Heart right ventricle (tissue), 16 donors: ENCODE measurements at regions of chr2 and their contacts with region 1.

Region 1: GRCh38 chr2:237413777-237414661 is at the start of gene COL6A3:
- DNase-seq: peak; percentile 59 to 77
- ATAC-seq: peak; percentile 65 to 81 (median 69)
- H3K4me3 ChIP-seq: peak within 1 kb of the TSS; percentile 32 to 63 (median 57)
- H3K27ac ChIP-seq: peak within 1 kb of the TSS; percentile 66 to 87 (median 81)
- H3K4me1 ChIP-seq: peaks cover 0 to 20% (median 2%) of the 10 kb centered on the region in 9 donors
- H3K27me3 ChIP-seq: peaks cover 0 to 26% (median 3%) of the 10 kb centered on the region in 7 donors
- CTCF ChIP-seq: no peak
- total RNA-seq, gene COL6A3: 27.7 to 222 (median 47.5) TPM

Region 2: GRCh38 chr2:237092920-237093781 is 320.9 kb before region 1 on chr2:
- intact Hi-C with region 1: loop called in 1 of 10 experiments (anchors 10 kb)
- DNase-seq: peak in 1 of 2 donors; percentile 48
- ATAC-seq: peak; percentile 66 to 82 (median 72)
- H3K4me3 ChIP-seq: no peak overlapping the region
- H3K27ac ChIP-seq: peak overlapping the region in 2 of 10 donors; percentile 50 to 62
- H3K4me1 ChIP-seq: peaks cover 0 to 60% (median 21%) of the 10 kb centered on the region in 9 donors
- H3K27me3 ChIP-seq: no peaks in the 10 kb centered on the region
- CTCF ChIP-seq: peak; percentile 24 to 67 (median 54)

Region 3: GRCh38 chr2:237113026-237113795 is 300.8 kb before region 1 on chr2:
- intact Hi-C with region 1: no loop called
- DNase-seq: no peak
- ATAC-seq: no peak
- H3K4me3 ChIP-seq: no peak overlapping the region
- H3K27ac ChIP-seq: no peak overlapping the region
- H3K4me1 ChIP-seq: peaks cover 0 to 7% (median 0%) of the 10 kb centered on the region in 9 donors
- H3K27me3 ChIP-seq: no peaks in the 10 kb centered on the region
- CTCF ChIP-seq: no peak

Region 4: GRCh38 chr2:237154082-237154638 is 259.9 kb before region 1 on chr2:
- intact Hi-C with region 1: loop called in 5 of 10 experiments (anchors 1 to 10 kb)
- DNase-seq: no peak
- ATAC-seq: no peak
- H3K4me3 ChIP-seq: no peak overlapping the region
- H3K27ac ChIP-seq: peak overlapping the region in 5 of 10 donors; percentile 14 to 82 (median 76)
- H3K4me1 ChIP-seq: peaks cover 0 to 28% (median 7%) of the 10 kb centered on the region in 9 donors
- H3K27me3 ChIP-seq: peaks cover 0 to 7% (median 0%) of the 10 kb centered on the region in 7 donors
- CTCF ChIP-seq: peak; percentile 12 to 67 (median 63)

Region 5: DNA sequence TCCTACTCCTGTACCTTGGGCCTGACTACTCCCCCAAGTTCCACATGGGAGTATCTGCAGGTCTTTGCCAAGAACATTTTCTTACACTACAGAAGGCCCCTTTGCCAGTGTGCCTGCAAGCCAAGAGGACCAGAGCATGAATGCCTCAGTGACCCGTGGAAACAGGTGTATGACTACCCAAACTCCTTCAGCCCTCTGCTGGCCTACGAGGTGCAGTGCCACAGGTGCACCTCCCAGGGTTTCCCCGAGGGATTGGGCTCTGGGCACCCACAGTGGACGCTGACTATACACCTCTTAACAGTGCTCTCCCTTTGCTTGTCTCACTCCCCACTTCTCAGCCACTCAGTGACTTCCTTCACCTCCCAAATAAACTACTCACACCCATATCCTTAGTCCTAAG is 91.5 kb before region 1 on chr2:
- intact Hi-C with region 1: loop called in 3 of 10 experiments (anchors 5 to 10 kb)
- DNase-seq: no peak
- ATAC-seq: peak in 5 of 8 donors; percentile 23 to 30 (median 26)
- H3K4me3 ChIP-seq: no peak overlapping the region
- H3K27ac ChIP-seq: peak overlapping the region in 8 of 10 donors; percentile 33 to 76 (median 69)
- H3K4me1 ChIP-seq: peaks cover 5 to 58% (median 29%) of the 10 kb centered on the region in 9 donors
- H3K27me3 ChIP-seq: no peaks in the 10 kb centered on the region
- CTCF ChIP-seq: peak in 7 of 9 donors; percentile 34 to 47 (median 41)

Region 6: GRCh38 chr2:237364655-237365054 is 49.4 kb before region 1 on chr2:
- intact Hi-C with region 1: no loop called
- DNase-seq: no peak
- ATAC-seq: peak in 1 of 8 donors; percentile 14
- H3K4me3 ChIP-seq: no peak overlapping the region
- H3K27ac ChIP-seq: no peak overlapping the region
- H3K4me1 ChIP-seq: peaks cover 0 to 26% (median 2%) of the 10 kb centered on the region in 9 donors
- H3K27me3 ChIP-seq: peaks cover 0 to 10% (median 0%) of the 10 kb centered on the region in 7 donors
- CTCF ChIP-seq: no peak

Region 7: DNA sequence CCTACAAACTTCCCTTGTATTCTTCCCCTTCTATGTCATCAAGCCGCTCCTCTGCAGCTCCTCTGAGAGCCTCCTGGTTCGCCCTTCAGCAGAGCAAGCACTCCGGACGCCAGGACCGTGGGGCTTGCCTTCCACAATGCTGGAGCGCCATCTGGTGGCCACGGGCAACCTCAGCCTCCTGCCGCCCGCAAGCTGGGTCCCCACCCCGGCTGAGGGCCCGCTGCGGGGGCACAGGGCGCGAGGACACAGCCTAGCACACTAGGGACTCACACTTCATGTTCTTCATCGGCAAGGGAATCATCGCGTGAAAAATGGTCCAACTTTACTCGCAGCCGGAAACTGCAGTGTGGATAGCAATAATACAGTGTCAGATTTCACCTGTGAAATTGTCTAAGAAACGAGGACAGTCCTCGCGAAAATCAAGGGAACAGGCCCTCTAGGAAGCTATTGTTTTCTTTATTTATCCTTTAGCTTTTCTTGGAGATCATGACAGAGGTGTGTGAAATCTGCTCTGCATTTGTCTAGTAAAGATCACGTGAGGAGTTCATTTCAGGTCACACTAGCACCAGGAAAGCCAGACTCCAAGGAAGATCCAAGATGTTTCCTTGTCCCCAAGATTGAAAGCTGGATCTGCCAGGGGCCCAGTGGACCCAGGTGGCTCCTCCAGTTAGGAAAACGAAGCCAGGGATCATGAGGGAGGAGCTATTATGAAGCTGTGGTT is 158.2 kb after region 1 on chr2:
- intact Hi-C with region 1: loop called in 1 of 10 experiments (anchors 10 kb)
- DNase-seq: peak; percentile 92 to 93
- ATAC-seq: peak; percentile 90 to 93 (median 92)
- H3K4me3 ChIP-seq: peak overlapping the region in 1 of 10 donors; percentile 24
- H3K27ac ChIP-seq: peak overlapping the region in 1 of 10 donors; percentile 19
- H3K4me1 ChIP-seq: peaks cover 0 to 45% (median 12%) of the 10 kb centered on the region in 9 donors
- H3K27me3 ChIP-seq: peaks cover 0 to 5% (median 0%) of the 10 kb centered on the region in 7 donors
- CTCF ChIP-seq: peak; percentile 97 to 100 (median 99)